HepG2 (cell line): ENCODE measurements at regions of chr5 and their contacts with region 1.

Region 1: DNA sequence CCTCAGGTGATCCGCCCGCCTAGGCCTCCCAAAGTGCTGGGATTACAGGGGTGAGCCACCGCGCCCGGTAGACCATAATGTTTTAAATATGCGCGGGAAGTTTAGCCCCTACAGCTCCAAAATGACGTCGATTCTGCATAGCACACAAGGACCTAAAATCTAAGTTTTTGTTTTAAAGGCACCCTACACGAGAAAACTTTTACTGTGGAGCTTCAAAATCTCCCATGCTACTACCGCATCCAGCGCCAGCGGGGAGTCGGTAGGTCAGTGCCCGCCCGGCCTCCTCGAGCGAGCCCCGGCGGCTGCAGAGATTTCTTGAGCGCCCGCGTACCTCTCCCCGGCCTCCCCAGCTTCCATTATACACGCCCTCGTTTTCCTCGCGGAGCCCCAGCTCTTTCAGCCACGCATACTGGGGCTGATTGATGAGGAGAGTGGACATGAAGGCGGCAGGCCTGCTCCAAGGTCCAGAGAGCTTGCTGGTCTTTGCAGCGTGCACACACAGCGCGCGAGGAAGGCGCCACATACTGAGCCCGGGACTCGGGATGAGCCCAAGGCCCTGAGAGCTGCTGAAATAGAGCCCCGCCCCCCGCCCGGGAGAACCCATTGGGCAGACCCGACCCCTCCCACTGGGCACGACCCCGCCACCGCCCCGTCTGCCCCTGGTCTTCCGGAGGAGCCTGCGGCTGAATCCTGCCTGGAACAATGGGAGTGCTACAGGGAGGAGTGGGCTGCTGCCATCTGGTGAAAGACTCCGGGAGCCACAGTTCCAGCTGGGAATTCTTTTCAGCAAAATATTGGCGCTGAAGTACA is at the start of gene ALDH7A1:
- DNase-seq: peak; percentile 95
- ATAC-seq: peak; percentile 95
- H3K4me3 ChIP-seq: peak within 1 kb of the TSS; percentile 75 to 85 (median 76)
- H3K27ac ChIP-seq: peak within 1 kb of the TSS; percentile 86
- H3K4me1 ChIP-seq: peaks cover 48% of the 10 kb centered on the region
- H3K27me3 ChIP-seq: no peaks in the 10 kb centered on the region; a peak in 1 of 5 replicates
- CTCF ChIP-seq: peak; percentile 82
- EP300 ChIP-seq: peak in 1 of 2 experiments; percentile 21; a peak in 1 of 4 replicates
- POLR2A ChIP-seq: peak; percentile 94 to 98
- RAD21 ChIP-seq: peak; percentile 59
- total RNA-seq, gene ALDH7A1: 69.0 and 132 TPM in 2 replicates

Region 2: GRCh38 chr5:126339215-126339805 is 255.6 kb before region 1 on chr5:
- CTCF ChIA-PET with region 1: interaction called, 3 read pairs
- POLR2A ChIA-PET with region 1: no interaction called
- in situ Hi-C with region 1: no loop called
- intact Hi-C with region 1: loop called (anchors 1 kb)
- DNase-seq: peak; percentile 61
- ATAC-seq: peak; percentile 36; the same call in 1 of the 3 replicates
- H3K4me3 ChIP-seq: no peak overlapping the region
- H3K27ac ChIP-seq: no peak overlapping the region
- H3K4me1 ChIP-seq: no peaks in the 10 kb centered on the region
- H3K27me3 ChIP-seq: no peaks in the 10 kb centered on the region
- CTCF ChIP-seq: peak; percentile 77
- EP300 ChIP-seq: no peak
- POLR2A ChIP-seq: no peak
- RAD21 ChIP-seq: peak; percentile 69; the same call in 1 of the 2 replicates

Region 3: GRCh38 chr5:126370796-126371718 is 223.8 kb before region 1 on chr5:
- CTCF ChIA-PET with region 1: no interaction called
- POLR2A ChIA-PET with region 1: interaction called, 10 read pairs
- in situ Hi-C with region 1: no loop called
- intact Hi-C with region 1: no loop called
- DNase-seq: peak; percentile 75
- ATAC-seq: peak; percentile 85
- H3K4me3 ChIP-seq: peak overlapping the region; percentile 55 to 85 (median 75)
- H3K27ac ChIP-seq: peak overlapping the region; percentile 87
- H3K4me1 ChIP-seq: peaks cover 65% of the 10 kb centered on the region
- H3K27me3 ChIP-seq: no peaks in the 10 kb centered on the region; a peak in 1 of 5 replicates
- CTCF ChIP-seq: peak; percentile 50
- EP300 ChIP-seq: no peak
- POLR2A ChIP-seq: peak; percentile 51 to 74; a peak in 3 of 4 replicates
- RAD21 ChIP-seq: peak; percentile 52; the same call in 1 of the 2 replicates

Region 4: DNA sequence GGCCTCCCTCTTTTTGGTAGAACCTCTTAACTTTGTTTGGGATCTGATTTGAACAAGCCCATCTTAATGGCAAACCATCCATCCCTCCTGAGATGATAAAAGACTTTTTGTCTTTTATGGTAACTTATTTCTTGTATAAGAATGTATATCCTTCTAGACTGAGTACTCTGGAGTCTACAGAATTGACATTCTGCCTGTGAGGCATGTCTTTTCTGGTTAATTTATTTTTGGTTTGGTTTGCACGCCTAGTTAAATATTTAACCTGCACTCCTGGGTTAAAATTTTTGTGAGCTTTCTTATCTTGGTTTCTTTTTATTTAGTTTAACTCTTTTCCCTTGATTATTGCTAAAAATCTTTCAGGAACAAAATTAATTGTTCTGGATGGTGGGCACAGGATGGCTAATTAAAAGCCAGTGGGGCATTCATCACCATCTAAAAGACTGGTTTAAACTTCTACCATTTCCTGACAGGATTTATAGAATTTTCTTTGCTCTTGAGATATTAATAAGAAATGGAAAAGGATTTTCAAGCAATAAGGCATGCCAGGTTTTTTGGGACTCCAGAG is 56.2 kb after region 1 on chr5:
- CTCF ChIA-PET with region 1: no interaction called
- POLR2A ChIA-PET with region 1: interaction called, 12 read pairs
- in situ Hi-C with region 1: no loop called
- intact Hi-C with region 1: loop called (anchors 2 kb)
- DNase-seq: no peak
- ATAC-seq: no peak
- H3K4me3 ChIP-seq: peak overlapping the region in 1 of 3 experiments; percentile 9; a peak in 1 of 6 replicates
- H3K27ac ChIP-seq: peak overlapping the region; percentile 82
- H3K4me1 ChIP-seq: peaks cover 78% of the 10 kb centered on the region
- H3K27me3 ChIP-seq: no peaks in the 10 kb centered on the region
- CTCF ChIP-seq: no peak
- EP300 ChIP-seq: no peak
- POLR2A ChIP-seq: no peak
- RAD21 ChIP-seq: no peak

Region 5: DNA sequence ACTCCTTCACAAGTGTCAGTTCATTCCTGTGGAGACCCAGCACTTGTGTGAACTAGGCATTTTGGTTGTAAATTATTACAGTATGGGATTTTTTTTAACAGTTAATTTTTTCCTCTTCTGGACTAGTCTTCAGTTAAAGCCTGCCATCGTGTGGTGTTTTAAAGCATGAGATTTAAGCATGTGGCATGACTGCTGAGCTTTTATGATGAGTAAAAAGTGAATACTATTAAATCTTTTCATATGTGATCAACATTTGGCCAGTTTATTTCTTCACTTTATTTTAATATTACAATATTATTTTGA is 207.1 kb after region 1 on chr5:
- CTCF ChIA-PET with region 1: no interaction called
- POLR2A ChIA-PET with region 1: no interaction called
- in situ Hi-C with region 1: no loop called
- intact Hi-C with region 1: loop called (anchors 2 kb)
- DNase-seq: peak; percentile 20
- ATAC-seq: no peak
- H3K4me3 ChIP-seq: no peak overlapping the region
- H3K27ac ChIP-seq: no peak overlapping the region
- H3K4me1 ChIP-seq: no peaks in the 10 kb centered on the region
- H3K27me3 ChIP-seq: no peaks in the 10 kb centered on the region
- CTCF ChIP-seq: peak; percentile 29; the same call in 1 of the 2 replicates
- EP300 ChIP-seq: no peak
- POLR2A ChIP-seq: no peak
- RAD21 ChIP-seq: no peak